ENCODE measurements at regions of chr2 and their contacts with region 1.

Region 1: GRCh38 chr2:75466708-75467311 is 93.9 kb downstream of the EVA1A start:
- DNase-seq: no peak
- ATAC-seq: no peak

Region 2: GRCh38 chr2:75608684-75609333 is 142.0 kb after region 1 on chr2:
- intact Hi-C with region 1: loop called (anchors 2 to 10 kb)
- DNase-seq: peak; percentile 41
- ATAC-seq: peak; percentile 74 to 81

Region 3: GRCh38 chr2:75619956-75620740 is 153.3 kb after region 1 on chr2:
- intact Hi-C with region 1: loop called in 1 of 2 experiments (anchors 10 kb)
- DNase-seq: no peak
- ATAC-seq: no peak

Measured in left cardiac atrium (tissue), 4 donors.